ENCODE measurements at regions of chr6 and their contacts with region 1.

Region 1: DNA sequence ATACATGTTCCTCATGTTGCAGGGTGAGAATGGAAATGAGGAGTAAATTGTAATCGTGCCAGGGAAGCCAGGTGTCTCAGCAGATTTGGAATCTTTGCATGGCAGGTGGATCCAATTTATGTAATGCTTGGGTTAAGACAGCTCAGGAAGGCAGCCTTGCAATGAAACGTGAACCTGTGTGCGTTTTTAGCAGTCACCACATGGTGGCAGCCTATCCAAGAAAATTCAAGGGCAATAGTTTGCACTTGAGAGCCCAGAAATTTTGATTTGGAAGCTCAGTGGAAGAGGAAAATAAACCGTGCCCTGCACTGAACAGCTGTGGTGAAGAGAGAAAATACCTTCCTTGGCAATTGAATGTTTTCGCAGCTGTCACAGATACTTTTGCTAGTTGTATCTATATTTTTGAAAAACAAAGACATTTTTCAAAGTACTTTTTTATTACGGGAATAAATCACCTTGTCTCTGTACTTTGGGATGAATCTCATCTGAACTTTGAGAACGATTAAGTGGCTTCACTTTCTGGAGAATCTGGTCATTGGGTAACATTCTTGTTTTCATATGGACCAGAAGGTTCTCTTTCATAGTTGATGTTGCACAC is 26.5 kb downstream of the MTHFD1L start:
- DNase-seq: peak; percentile 76
- H3K4me3 Mint-ChIP-seq: no peak overlapping the region
- H3K27ac Mint-ChIP-seq: no peak overlapping the region
- H3K4me1 Mint-ChIP-seq: peaks cover 31% of the 10 kb centered on the region
- H3K27me3 Mint-ChIP-seq: no peaks in the 10 kb centered on the region

Region 2: DNA sequence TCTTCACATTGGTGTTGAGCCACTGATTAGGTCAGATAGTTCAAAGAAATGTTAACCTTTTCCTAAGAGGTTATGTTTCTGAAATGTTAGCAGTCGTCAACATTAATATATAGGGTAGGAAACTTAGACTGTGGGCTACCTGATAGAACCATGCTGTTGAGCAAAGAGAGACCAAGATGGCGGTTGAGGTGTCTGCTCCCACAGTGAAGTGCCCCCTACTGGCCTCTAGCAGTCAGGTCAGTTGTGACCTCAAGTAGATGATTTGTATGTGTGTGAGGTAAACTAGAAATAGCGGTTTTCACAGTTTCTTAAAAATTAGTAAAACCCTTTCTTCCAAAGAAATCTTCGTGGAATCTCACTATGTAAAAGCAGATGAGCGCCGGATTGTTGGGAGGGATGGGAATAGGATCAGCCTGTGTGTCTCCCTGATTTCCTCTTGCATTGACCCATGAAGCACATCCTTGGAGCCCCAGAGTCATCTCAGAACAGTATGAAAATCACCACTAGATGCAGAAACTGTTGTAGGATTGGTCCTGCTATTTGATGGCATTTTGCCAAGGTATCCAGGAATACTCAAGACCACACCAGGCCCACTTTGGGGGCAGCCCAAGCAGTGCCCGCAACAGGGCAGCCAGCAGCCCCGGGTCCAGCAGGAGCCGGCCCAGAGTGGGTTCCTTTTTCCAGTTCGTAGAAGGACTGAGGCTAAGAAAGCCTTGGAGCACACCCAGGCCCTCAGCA is 14.0 kb after region 1 on chr6:
- CTCF ChIA-PET with region 1: interaction called, 24 read pairs
- DNase-seq: no peak
- H3K4me3 Mint-ChIP-seq: no peak overlapping the region
- H3K27ac Mint-ChIP-seq: no peak overlapping the region
- H3K4me1 Mint-ChIP-seq: no peaks in the 10 kb centered on the region
- H3K27me3 Mint-ChIP-seq: no peaks in the 10 kb centered on the region

Region 3: DNA sequence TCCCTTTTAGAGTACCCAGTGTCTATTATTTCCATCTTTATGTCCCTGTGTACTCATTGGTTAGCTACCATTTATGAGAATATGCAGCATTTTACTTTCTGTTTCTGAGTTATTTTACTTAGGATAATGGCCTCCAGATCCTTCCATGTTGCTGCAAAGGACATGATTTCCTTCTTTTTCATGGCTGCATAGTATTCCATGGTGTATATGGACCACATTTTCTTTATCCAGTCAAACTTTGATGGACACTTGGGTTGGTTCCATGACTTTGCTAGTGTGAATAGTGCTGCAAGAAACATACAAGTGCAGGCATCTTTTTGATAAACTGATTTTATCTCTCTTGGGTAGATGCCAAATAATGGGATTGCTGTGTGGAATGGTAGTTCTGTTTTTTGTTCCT is 443.9 kb after region 1 on chr6:
- CTCF ChIA-PET with region 1: interaction called, 32 read pairs
- DNase-seq: no peak
- H3K4me3 Mint-ChIP-seq: no peak overlapping the region
- H3K27ac Mint-ChIP-seq: no peak overlapping the region
- H3K4me1 Mint-ChIP-seq: peaks cover 3% of the 10 kb centered on the region
- H3K27me3 Mint-ChIP-seq: peaks cover 13% of the 10 kb centered on the region